ENCODE measurements at regions of chr12 and their contacts with region 1.

Region 1: GRCh38 chr12:32139064-32139421 is 32.4 kb downstream of the BICD1 start:
- DNase-seq: peak; percentile 94
- H3K4me3 ChIP-seq: peak overlapping the region; percentile 63
- H3K27ac ChIP-seq: peak overlapping the region; percentile 98
- H3K4me1 ChIP-seq: peaks cover 87% of the 10 kb centered on the region
- CTCF ChIP-seq: no peak

Region 2: DNA sequence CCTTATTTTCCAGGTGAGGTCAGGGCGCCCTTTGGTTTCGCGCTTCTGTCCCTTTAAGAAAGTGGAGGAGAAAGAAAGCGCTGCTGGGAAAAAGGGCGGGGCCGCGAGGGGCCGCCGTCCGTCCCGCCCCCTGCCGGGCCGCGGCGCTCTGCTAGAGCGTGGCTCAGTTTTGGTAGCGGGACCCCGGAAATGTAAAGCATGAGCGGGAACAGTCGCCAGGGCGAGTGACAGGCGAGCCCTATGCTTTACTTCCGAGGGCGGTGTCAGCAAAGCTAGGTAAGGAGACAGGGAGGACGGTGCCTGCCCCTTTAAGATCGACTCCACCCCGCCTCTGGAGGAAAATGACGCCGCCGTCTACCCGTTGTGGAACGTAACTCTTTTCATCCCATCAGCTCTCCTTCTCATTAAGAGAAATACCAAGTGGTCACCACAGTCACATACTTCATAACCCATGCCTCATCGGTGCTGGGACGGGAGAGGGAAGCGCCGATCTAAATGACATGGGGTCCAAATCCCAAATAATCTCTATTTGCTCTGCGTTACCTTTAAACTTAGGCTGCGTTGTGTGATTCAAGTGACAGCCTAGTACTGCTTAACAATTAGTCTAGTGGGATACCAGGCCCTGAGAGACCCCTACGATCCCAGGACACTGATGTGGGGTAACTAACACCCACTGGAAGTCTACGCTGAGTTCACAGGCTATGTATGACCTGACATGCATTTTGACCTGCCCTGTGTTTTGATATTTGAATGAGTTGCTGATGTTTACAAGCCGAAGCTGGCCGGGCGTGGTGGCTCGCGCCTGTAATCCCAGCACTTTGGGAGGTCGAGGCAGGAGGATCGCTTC is 479.7 kb before region 1 on chr12 and contains the start of gene ETFBKMT:
- CTCF ChIA-PET with region 1: no interaction called
- POLR2A ChIA-PET with region 1: no interaction called
- intact Hi-C with region 1: loop called (anchors 1 kb)
- DNase-seq: peak; percentile 99
- H3K4me3 ChIP-seq: peak within 1 kb of the TSS; percentile 86
- H3K27ac ChIP-seq: peak within 1 kb of the TSS; percentile 86
- H3K4me1 ChIP-seq: peaks cover 20% of the 10 kb centered on the region
- CTCF ChIP-seq: peak; percentile 65
- total RNA-seq, gene ETFBKMT: 0.54 and 0.92 TPM in 2 replicates

Region 3: GRCh38 chr12:31959161-31959700 is 179.8 kb before region 1 on chr12 and contains the start of gene RESF1:
- CTCF ChIA-PET with region 1: interaction called, 3 read pairs
- POLR2A ChIA-PET with region 1: no interaction called
- intact Hi-C with region 1: loop called (anchors 10 kb)
- DNase-seq: peak; percentile 97
- H3K4me3 ChIP-seq: peak within 1 kb of the TSS; percentile 78
- H3K27ac ChIP-seq: peak within 1 kb of the TSS; percentile 87
- H3K4me1 ChIP-seq: peaks cover 28% of the 10 kb centered on the region
- CTCF ChIP-seq: no peak
- total RNA-seq, gene RESF1: 53.3 and 70.4 TPM in 2 replicates

Region 4: DNA sequence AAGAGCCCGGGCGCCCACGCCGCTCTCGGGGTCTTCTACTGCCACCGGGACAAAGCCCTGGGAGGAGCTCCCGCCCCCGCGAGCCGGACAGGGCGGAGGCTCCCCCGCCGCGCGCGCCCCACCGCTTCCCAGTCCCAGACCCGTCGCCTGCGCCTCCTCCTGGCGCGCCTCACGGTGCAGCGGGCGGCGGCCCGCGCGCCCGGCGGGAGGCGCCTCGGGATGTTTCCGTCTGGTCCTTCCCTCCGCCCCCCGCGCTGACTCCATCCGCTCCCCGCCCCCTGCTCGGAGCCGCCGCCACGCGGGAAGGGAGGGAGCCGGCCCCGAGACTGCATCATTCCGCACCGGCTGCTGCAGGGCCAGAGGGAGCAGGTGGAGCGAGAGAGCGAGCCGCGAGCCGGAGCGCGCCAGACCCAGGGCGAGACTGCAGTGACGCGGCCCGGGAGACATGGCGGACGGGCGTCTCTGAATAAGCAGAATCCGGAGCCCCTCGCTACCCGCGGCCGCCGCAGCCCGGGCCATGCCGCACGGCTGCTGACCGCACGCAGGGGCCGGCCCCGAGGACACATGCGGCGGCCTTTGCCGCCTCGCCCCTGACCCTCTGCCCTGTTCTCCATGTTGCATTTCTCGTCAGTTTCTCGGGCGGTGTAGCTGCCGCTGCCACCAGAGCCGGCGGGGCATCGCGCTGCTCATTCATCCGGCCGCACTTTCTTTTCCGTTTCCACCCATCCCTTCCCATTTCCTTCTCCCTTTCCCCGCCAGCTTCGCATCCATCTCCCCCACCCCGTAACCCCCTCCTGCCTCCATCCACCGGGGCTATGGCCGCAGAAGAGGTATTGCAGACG is 32.3 kb before region 1 on chr12 and contains the start of gene BICD1:
- CTCF ChIA-PET with region 1: interaction called, 3 read pairs
- POLR2A ChIA-PET with region 1: interaction called, 9 read pairs
- intact Hi-C with region 1: loop called (anchors 1 kb)
- DNase-seq: peak; percentile 84
- H3K4me3 ChIP-seq: peak within 1 kb of the TSS; percentile 97
- H3K27ac ChIP-seq: peak within 1 kb of the TSS; percentile 66
- H3K4me1 ChIP-seq: peaks cover 25% of the 10 kb centered on the region
- CTCF ChIP-seq: peak; percentile 60
- total RNA-seq, gene BICD1: 40.4 and 42.9 TPM in 2 replicates

Region 5: GRCh38 chr12:32264961-32265360 is 125.9 kb after region 1 on chr12:
- CTCF ChIA-PET with region 1: no interaction called
- POLR2A ChIA-PET with region 1: interaction called, 8 read pairs
- intact Hi-C with region 1: loop called (anchors 2 kb)
- DNase-seq: peak; percentile 96
- H3K4me3 ChIP-seq: peak overlapping the region; percentile 56
- H3K27ac ChIP-seq: peak overlapping the region; percentile 99
- H3K4me1 ChIP-seq: peaks cover 95% of the 10 kb centered on the region
- CTCF ChIP-seq: no peak

Region 6: DNA sequence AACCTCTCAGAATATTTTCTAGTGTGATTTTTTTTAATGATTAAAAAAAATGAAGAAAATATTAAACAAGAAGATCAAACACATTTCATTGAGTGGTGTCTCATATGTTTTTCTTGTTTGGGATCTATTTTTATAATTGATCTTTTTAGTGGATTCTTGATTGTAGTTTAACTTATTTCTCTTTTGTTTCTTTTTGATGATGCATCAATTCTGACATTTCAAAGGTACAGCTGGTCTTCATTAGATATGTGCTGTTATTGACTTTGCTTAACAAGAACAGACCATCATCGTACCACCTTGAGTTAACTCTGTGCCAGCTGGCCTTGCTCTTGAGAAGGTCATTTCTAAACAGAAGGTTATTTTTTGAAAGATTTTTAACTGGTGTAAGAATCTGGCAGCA is 214.5 kb after region 1 on chr12:
- CTCF ChIA-PET with region 1: no interaction called
- POLR2A ChIA-PET with region 1: no interaction called
- intact Hi-C with region 1: no loop called
- DNase-seq: no peak
- H3K4me3 ChIP-seq: no peak overlapping the region
- H3K27ac ChIP-seq: no peak overlapping the region
- H3K4me1 ChIP-seq: no peaks in the 10 kb centered on the region
- CTCF ChIP-seq: no peak

Measured in OCI-LY7 (cell line).